Activated naive CD4-positive, alpha-beta T cell treated with anti-CD3 and anti-CD28 coated beads for 36 hours (primary cell): ENCODE measurements at regions of chr6 and their contacts with region 1.

Region 1: DNA sequence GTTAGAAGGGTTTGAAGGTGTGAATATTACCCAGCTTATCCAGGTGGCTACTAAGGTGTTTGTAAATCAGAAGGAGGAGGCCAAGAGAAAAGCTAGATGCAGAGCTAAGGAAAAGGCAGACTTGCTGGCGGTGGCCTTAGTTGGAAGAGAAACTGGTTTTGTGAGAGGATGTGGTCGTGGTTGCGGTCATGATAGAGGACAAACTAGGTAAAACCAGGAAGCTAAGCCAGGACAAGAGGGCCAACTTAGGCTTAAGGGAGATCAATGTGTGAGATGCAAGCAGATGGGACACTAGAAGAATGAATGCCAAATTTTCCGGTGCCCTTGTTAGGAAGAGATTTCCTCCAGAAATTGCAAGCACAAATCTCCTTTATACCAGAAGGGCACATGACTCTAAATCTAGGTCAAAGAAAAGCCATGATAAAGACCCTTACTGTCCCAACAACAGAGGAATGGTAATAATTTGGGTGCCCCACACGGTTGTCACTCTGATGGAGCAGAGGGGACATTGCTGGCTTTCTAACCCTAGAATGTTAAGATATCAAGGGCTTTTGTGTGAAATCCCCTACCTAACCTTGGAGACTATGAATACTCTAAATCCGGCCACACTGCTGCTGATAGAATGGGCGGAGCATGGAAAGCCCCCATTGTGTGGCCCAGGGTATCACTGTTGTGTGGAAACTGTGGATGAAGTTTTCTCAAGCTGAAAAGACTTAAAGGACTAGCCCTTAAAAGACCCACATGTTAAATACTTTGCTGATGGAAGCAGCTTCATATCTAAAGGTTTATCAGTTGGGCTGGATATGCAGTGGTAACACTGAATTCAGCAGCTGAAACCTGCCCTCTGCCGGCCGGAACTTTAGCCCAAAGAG is 7.8 kb downstream of the IL22RA2 start:
- DNase-seq: peak; percentile 64
- H3K4me3 Mint-ChIP-seq: no peak overlapping the region
- H3K27ac Mint-ChIP-seq: no peak overlapping the region
- H3K4me1 Mint-ChIP-seq: peaks cover 27% of the 10 kb centered on the region
- H3K27me3 Mint-ChIP-seq: peaks cover 13% of the 10 kb centered on the region

Region 2: DNA sequence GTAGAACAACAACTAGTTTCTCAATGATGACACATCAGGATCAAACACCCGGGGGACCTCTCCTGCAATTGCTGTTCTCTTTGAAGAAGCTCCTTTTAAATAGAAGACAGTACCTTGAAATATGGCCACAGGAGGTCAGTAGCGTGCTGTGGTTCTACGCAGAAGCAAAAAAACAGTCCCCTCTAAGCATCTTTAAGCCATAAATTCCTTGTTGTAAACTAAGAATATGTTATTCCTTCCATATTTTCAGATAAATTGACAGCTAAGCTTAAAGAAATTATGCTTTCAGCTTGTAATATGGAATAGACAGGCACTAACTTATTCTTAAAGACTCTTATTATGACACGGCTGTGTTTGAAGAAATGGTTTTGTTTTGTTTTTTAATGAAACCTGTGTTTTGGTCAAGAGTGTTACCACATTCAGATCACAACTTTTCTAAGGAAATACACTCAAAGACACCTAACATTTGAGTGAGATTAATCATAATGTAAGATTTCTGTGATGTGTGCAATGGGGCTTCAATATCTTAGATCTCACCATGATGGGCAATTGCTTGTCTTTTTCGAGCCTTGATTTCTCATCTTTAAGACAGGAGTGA is 71.1 kb before region 1 on chr6:
- CTCF ChIA-PET with region 1: interaction called, 9 read pairs
- intact Hi-C with region 1: loop called (anchors 1 kb)
- DNase-seq: peak; percentile 75
- H3K4me3 Mint-ChIP-seq: no peak overlapping the region
- H3K27ac Mint-ChIP-seq: no peak overlapping the region
- H3K4me1 Mint-ChIP-seq: peaks cover 13% of the 10 kb centered on the region
- H3K27me3 Mint-ChIP-seq: peaks cover 3% of the 10 kb centered on the region

Region 3: GRCh38 chr6:137233911-137234863 is 68.6 kb after region 1 on chr6:
- CTCF ChIA-PET with region 1: no interaction called
- intact Hi-C with region 1: loop called (anchors 1 kb)
- DNase-seq: peak; percentile 21
- H3K4me3 Mint-ChIP-seq: no peak overlapping the region
- H3K27ac Mint-ChIP-seq: peak overlapping the region; percentile 28
- H3K4me1 Mint-ChIP-seq: peaks cover 38% of the 10 kb centered on the region
- H3K27me3 Mint-ChIP-seq: peaks cover 5% of the 10 kb centered on the region

Region 4: DNA sequence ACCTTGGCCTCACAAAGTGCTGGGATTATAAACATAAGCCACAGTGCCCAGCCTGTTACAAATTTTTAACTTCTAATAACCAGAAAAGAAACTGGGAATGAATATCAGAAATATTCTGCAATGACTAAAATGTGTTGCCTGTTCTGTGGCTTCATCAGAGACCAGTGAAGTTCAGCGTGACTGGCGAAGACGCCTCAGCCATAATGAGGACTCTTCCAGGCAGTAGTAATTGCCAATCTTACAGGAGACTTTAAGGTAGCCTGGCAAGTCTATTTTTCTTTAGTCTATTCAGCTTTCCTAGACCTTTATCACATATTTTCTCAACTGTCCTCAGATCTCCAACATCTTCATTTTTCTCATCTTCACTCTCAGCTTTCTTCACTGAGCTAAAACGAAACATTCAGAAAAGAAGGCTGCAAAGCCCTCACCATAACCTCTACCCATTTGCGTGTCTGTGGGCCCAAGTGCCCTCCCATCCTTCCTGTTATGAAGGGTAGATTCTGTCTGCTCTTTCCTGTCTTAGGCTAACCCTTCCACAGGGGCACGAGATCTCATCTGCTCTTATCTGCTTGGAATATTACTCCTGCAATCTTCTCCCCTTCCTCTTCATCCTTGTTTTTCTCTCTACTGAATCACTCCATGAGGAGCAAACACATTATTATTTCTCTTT is 370.6 kb after region 1 on chr6:
- CTCF ChIA-PET with region 1: no interaction called
- intact Hi-C with region 1: loop called (anchors 5 kb)
- DNase-seq: peak; percentile 62
- H3K4me3 Mint-ChIP-seq: no peak overlapping the region
- H3K27ac Mint-ChIP-seq: no peak overlapping the region
- H3K4me1 Mint-ChIP-seq: no peaks in the 10 kb centered on the region
- H3K27me3 Mint-ChIP-seq: no peaks in the 10 kb centered on the region

Region 5: GRCh38 chr6:137699031-137699683 is 533.5 kb after region 1 on chr6:
- CTCF ChIA-PET with region 1: no interaction called
- intact Hi-C with region 1: loop called (anchors 2 kb)
- DNase-seq: peak; percentile 71
- H3K4me3 Mint-ChIP-seq: peak overlapping the region; percentile 3
- H3K27ac Mint-ChIP-seq: peak overlapping the region; percentile 78
- H3K4me1 Mint-ChIP-seq: peaks cover 31% of the 10 kb centered on the region
- H3K27me3 Mint-ChIP-seq: peaks cover 12% of the 10 kb centered on the region